ENCODE measurements at regions of chr5 and their contacts with region 1.

Region 1: DNA sequence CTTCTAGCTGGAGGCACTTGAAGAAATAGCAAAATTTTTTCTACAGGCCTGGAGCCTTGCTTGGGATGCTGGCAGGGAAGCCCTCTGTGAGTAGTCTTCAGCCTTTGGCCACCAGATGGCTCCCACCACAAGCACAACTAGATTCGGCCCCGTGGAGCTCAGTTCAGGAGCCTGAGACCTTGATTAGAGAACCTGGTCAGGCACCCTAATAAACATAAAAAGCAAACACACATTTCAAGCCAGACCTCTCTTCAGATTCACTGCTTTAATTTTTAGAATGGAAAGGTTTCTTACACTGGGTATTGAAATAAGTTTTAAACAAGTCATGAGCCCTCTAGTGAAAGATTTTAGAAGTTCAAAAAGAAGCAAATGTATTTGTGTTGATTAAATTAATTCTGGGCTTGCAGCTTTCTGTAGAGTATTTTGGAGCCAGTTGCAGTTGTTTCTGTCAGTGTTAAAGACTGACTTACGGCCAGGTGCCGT is 41.4 kb downstream of the GLRX start:
- DNase-seq: peak; percentile 84
- H3K4me3 ChIP-seq: no peak overlapping the region
- H3K27ac ChIP-seq: no peak overlapping the region
- H3K4me1 ChIP-seq: peaks cover 11% of the 10 kb centered on the region
- H3K27me3 ChIP-seq: no peaks in the 10 kb centered on the region
- CTCF ChIP-seq: peak; percentile 85 to 94
- POLR2A ChIP-seq: no peak

Region 2: GRCh38 chr5:95655575-95655974 is 125.6 kb before region 1 on chr5:
- CTCF ChIA-PET with region 1: interaction called, 10 read pairs
- POLR2A ChIA-PET with region 1: no interaction called
- dilution Hi-C with region 1: no loop called
- intact Hi-C with region 1: no loop called
- DNase-seq: no peak
- H3K4me3 ChIP-seq: no peak overlapping the region
- H3K27ac ChIP-seq: no peak overlapping the region
- H3K4me1 ChIP-seq: no peaks in the 10 kb centered on the region
- H3K27me3 ChIP-seq: no peaks in the 10 kb centered on the region
- CTCF ChIP-seq: no peak
- POLR2A ChIP-seq: no peak

Region 3: GRCh38 chr5:95669540-95669939 is 111.6 kb before region 1 on chr5:
- CTCF ChIA-PET with region 1: interaction called, 56 read pairs
- POLR2A ChIA-PET with region 1: no interaction called
- dilution Hi-C with region 1: no loop called
- intact Hi-C with region 1: loop called (anchors 1 kb)
- DNase-seq: peak; percentile 84
- H3K4me3 ChIP-seq: no peak overlapping the region
- H3K27ac ChIP-seq: peak overlapping the region; percentile 69
- H3K4me1 ChIP-seq: peaks cover 23% of the 10 kb centered on the region
- H3K27me3 ChIP-seq: no peaks in the 10 kb centered on the region
- CTCF ChIP-seq: no peak
- POLR2A ChIP-seq: no peak

Region 4: GRCh38 chr5:95760273-95761191 is 20.6 kb before region 1 on chr5:
- CTCF ChIA-PET with region 1: interaction called, 10 read pairs
- POLR2A ChIA-PET with region 1: no interaction called
- dilution Hi-C with region 1: no loop called
- intact Hi-C with region 1: no loop called
- DNase-seq: peak; percentile 78
- H3K4me3 ChIP-seq: peak overlapping the region in 1 of 3 experiments; percentile 17
- H3K27ac ChIP-seq: peak overlapping the region; percentile 78
- H3K4me1 ChIP-seq: peaks cover 36% of the 10 kb centered on the region
- H3K27me3 ChIP-seq: no peaks in the 10 kb centered on the region
- CTCF ChIP-seq: no peak
- POLR2A ChIP-seq: no peak

Region 5: GRCh38 chr5:95816776-95817175 is 35.6 kb after region 1 on chr5:
- CTCF ChIA-PET with region 1: interaction called, 55 read pairs
- POLR2A ChIA-PET with region 1: no interaction called
- dilution Hi-C with region 1: no loop called
- intact Hi-C with region 1: no loop called
- DNase-seq: no peak
- H3K4me3 ChIP-seq: no peak overlapping the region
- H3K27ac ChIP-seq: no peak overlapping the region
- H3K4me1 ChIP-seq: peaks cover 4% of the 10 kb centered on the region
- H3K27me3 ChIP-seq: no peaks in the 10 kb centered on the region
- CTCF ChIP-seq: no peak
- POLR2A ChIP-seq: no peak

Region 6: GRCh38 chr5:95835682-95836385 is 54.7 kb after region 1 on chr5:
- CTCF ChIA-PET with region 1: interaction called, 201 read pairs
- POLR2A ChIA-PET with region 1: no interaction called
- dilution Hi-C with region 1: no loop called
- intact Hi-C with region 1: no loop called
- DNase-seq: peak; percentile 22
- H3K4me3 ChIP-seq: peak overlapping the region in 1 of 3 experiments; percentile 7
- H3K27ac ChIP-seq: no peak overlapping the region
- H3K4me1 ChIP-seq: peaks cover 21% of the 10 kb centered on the region
- H3K27me3 ChIP-seq: no peaks in the 10 kb centered on the region
- CTCF ChIP-seq: no peak
- POLR2A ChIP-seq: no peak

Region 7: GRCh38 chr5:95878417-95879323 is 97.5 kb after region 1 on chr5:
- CTCF ChIA-PET with region 1: no interaction called
- POLR2A ChIA-PET with region 1: no interaction called
- dilution Hi-C with region 1: no loop called
- intact Hi-C with region 1: no loop called
- DNase-seq: no peak
- H3K4me3 ChIP-seq: no peak overlapping the region
- H3K27ac ChIP-seq: no peak overlapping the region
- H3K4me1 ChIP-seq: no peaks in the 10 kb centered on the region
- H3K27me3 ChIP-seq: no peaks in the 10 kb centered on the region
- CTCF ChIP-seq: no peak
- POLR2A ChIP-seq: no peak

Region 8: GRCh38 chr5:96336351-96336985 is 555.3 kb after region 1 on chr5:
- CTCF ChIA-PET with region 1: interaction called, 20 read pairs
- POLR2A ChIA-PET with region 1: no interaction called
- dilution Hi-C with region 1: no loop called
- intact Hi-C with region 1: loop called (anchors 1 kb)
- DNase-seq: peak; percentile 92
- H3K4me3 ChIP-seq: no peak overlapping the region
- H3K27ac ChIP-seq: peak overlapping the region; percentile 32
- H3K4me1 ChIP-seq: peaks cover 7% of the 10 kb centered on the region
- H3K27me3 ChIP-seq: no peaks in the 10 kb centered on the region
- CTCF ChIP-seq: peak; percentile 84 to 88
- POLR2A ChIP-seq: no peak